MCF 10A (cell line): ENCODE measurements at regions of chr14 and their contacts with region 1.

Region 1: GRCh38 chr14:45610318-45610717 is 357.3 kb upstream of the MIS18BP1 start:
- DNase-seq: peak; percentile 35
- H3K4me3 Mint-ChIP-seq: no peak overlapping the region
- H3K27ac Mint-ChIP-seq: no peak overlapping the region
- H3K4me1 Mint-ChIP-seq: no peaks in the 10 kb centered on the region
- H3K27me3 Mint-ChIP-seq: no peaks in the 10 kb centered on the region
- CTCF ChIP-seq: peak; percentile 38

Region 2: GRCh38 chr14:45553981-45554380 is 56.3 kb before region 1 on chr14:
- CTCF ChIA-PET with region 1: no interaction called
- POLR2A ChIA-PET with region 1: no interaction called
- intact Hi-C with region 1: no loop called
- DNase-seq: no peak
- H3K4me3 Mint-ChIP-seq: no peak overlapping the region
- H3K27ac Mint-ChIP-seq: no peak overlapping the region
- H3K4me1 Mint-ChIP-seq: no peaks in the 10 kb centered on the region
- H3K27me3 Mint-ChIP-seq: no peaks in the 10 kb centered on the region
- CTCF ChIP-seq: no peak

Region 3: GRCh38 chr14:45641541-45641940 is 31.2 kb after region 1 on chr14:
- CTCF ChIA-PET with region 1: no interaction called
- POLR2A ChIA-PET with region 1: no interaction called
- intact Hi-C with region 1: no loop called
- DNase-seq: no peak
- H3K4me3 Mint-ChIP-seq: no peak overlapping the region
- H3K27ac Mint-ChIP-seq: no peak overlapping the region
- H3K4me1 Mint-ChIP-seq: peaks cover 6% of the 10 kb centered on the region
- H3K27me3 Mint-ChIP-seq: no peaks in the 10 kb centered on the region
- CTCF ChIP-seq: no peak

Region 4: GRCh38 chr14:45819107-45819506 is 208.8 kb after region 1 on chr14:
- CTCF ChIA-PET with region 1: no interaction called
- POLR2A ChIA-PET with region 1: no interaction called
- intact Hi-C with region 1: loop called (anchors 1 kb)
- DNase-seq: peak; percentile 9
- H3K4me3 Mint-ChIP-seq: no peak overlapping the region
- H3K27ac Mint-ChIP-seq: no peak overlapping the region
- H3K4me1 Mint-ChIP-seq: no peaks in the 10 kb centered on the region
- H3K27me3 Mint-ChIP-seq: no peaks in the 10 kb centered on the region
- CTCF ChIP-seq: peak; percentile 6